ENCODE measurements at regions of chr4 and their contacts with region 1.

Region 1: GRCh38 chr4:185142912-185143595 is at the start of gene SLC25A4:
- DNase-seq: peak; percentile 94
- H3K4me3 ChIP-seq: peak within 1 kb of the TSS; percentile 60 to 81 (median 78)
- H3K27ac ChIP-seq: peak within 1 kb of the TSS; percentile 88 to 98 (median 94)
- H3K4me1 ChIP-seq: peaks cover 0 to 41% (median 34%) of the 10 kb centered on the region in 4 donors
- H3K27me3 ChIP-seq: no peaks in the 10 kb centered on the region
- CTCF ChIP-seq: peak in 3 of 4 experiments; percentile 15 to 57 (median 50)
- EP300 ChIP-seq: peak in 1 of 4 donors; percentile 7
- POLR2A ChIP-seq: peak; percentile 62
- total RNA-seq, gene SLC25A4: 89.1 to 127 (median 112) TPM

Region 2: DNA sequence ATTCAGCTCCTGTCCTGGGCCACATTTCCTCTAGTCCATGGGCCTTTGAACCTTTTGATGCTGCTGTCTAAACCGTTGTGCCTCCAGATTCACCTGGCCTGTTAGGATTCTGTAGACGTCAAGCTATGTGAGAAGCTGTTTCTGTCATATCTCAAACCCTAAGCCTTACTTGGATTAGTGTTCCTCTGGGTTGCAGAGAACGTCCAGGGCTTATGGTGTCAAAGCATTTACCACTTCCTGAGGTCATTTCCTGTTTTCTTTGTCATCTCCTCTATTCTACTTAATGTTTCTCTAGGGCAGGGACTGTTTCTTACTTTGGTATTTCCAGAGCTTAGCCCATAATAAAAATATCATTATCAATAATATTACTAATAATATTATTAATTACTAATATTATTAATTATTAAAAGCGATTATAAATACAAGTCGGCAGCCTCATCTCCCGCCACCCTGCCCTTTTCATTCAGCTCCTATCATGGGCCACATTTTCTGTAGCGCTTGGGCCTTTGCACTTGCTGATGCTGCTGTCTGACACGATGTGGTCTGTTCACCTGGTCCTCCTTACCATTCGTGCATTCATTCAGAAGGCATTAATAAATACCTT is 474.4 kb before region 1 on chr4:
- intact Hi-C with region 1: no loop called
- DNase-seq: no peak
- H3K4me3 ChIP-seq: no peak overlapping the region
- H3K27ac ChIP-seq: no peak overlapping the region
- H3K4me1 ChIP-seq: no peaks in the 10 kb centered on the region
- H3K27me3 ChIP-seq: no peaks in the 10 kb centered on the region
- CTCF ChIP-seq: no peak
- EP300 ChIP-seq: no peak
- POLR2A ChIP-seq: no peak

Region 3: DNA sequence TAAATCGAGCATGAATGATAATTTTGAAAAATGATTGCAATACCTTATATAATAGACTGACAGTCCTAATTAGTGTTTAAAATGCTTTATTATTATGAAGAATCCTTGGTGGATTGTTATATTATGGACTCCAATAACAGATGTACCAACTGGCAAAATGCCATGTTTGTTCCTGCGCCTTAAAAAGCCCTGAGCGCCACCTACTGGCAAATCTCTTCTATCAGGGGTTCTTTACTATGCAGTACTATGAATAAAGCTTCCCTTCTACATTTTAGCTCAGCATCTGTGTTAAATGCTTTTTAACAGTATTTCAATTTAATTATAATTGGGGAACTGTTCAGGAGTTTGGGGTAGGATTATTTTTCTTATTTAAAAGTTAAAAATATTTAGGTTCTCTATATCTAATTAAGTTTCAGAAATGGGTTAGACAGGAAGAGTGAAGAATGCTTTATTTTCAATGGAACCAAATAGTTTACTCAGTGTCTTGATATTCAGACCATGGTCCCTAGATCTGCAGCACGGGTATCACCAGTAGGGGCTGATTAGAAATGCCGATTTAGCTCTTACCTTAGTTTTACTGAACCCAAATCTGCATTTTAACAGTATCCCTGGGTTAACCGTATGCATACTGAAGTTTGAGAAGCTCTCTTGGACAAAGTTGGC is 40.7 kb after region 1 on chr4:
- intact Hi-C with region 1: loop called (anchors 5 kb)
- DNase-seq: peak; percentile 92
- H3K4me3 ChIP-seq: no peak overlapping the region
- H3K27ac ChIP-seq: peak overlapping the region in 1 of 4 donors; percentile 4
- H3K4me1 ChIP-seq: peaks cover 0 to 28% (median 5%) of the 10 kb centered on the region in 4 donors
- H3K27me3 ChIP-seq: no peaks in the 10 kb centered on the region
- CTCF ChIP-seq: peak; percentile 42 to 75 (median 64)
- EP300 ChIP-seq: no peak
- POLR2A ChIP-seq: no peak

Region 4: DNA sequence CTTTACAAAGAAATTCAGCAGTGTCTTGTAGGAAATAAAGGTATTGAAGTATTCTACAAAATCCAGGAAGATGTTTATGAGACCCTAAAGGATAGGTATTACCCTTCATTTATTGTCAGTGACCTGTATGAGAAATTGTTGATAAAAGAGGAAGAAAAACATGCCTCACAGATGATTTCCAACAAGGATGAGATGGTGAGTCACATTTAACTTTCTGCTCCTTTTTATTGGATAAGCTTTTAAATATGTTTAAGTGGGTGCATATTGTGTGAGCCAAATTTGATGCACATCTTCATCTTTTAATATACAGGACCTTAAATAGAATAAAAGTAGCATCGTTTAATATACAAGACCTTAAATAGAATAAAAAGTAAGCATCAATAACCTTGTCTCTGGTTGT is 180.6 kb after region 1 on chr4:
- intact Hi-C with region 1: no loop called
- DNase-seq: no peak
- H3K4me3 ChIP-seq: no peak overlapping the region
- H3K27ac ChIP-seq: peak overlapping the region in 3 of 4 donors; percentile 25 to 70 (median 64)
- H3K4me1 ChIP-seq: peaks cover 0 to 17% (median 5%) of the 10 kb centered on the region in 4 donors
- H3K27me3 ChIP-seq: no peaks in the 10 kb centered on the region
- CTCF ChIP-seq: no peak
- EP300 ChIP-seq: no peak
- POLR2A ChIP-seq: no peak

Measured in sigmoid colon (tissue), 7 donors.